MCF 10A (cell line): ENCODE measurements at regions of chr13 and their contacts with region 1.

Region 1: GRCh38 chr13:75876360-75877050 is 240.4 kb downstream of the LMO7 start:
- DNase-seq: peak; percentile 80
- H3K4me3 Mint-ChIP-seq: no peak overlapping the region
- H3K27ac Mint-ChIP-seq: no peak overlapping the region
- H3K4me1 Mint-ChIP-seq: no peaks in the 10 kb centered on the region
- H3K27me3 Mint-ChIP-seq: no peaks in the 10 kb centered on the region
- CTCF ChIP-seq: peak; percentile 90

Region 2: GRCh38 chr13:75798353-75799255 is 77.9 kb before region 1 on chr13:
- CTCF ChIA-PET with region 1: no interaction called
- POLR2A ChIA-PET with region 1: no interaction called
- intact Hi-C with region 1: no loop called
- DNase-seq: peak; percentile 44
- H3K4me3 Mint-ChIP-seq: no peak overlapping the region
- H3K27ac Mint-ChIP-seq: no peak overlapping the region
- H3K4me1 Mint-ChIP-seq: no peaks in the 10 kb centered on the region
- H3K27me3 Mint-ChIP-seq: no peaks in the 10 kb centered on the region
- CTCF ChIP-seq: no peak

Region 3: GRCh38 chr13:75889427-75889826 is 12.9 kb after region 1 on chr13:
- CTCF ChIA-PET with region 1: interaction called, 11 read pairs
- POLR2A ChIA-PET with region 1: no interaction called
- intact Hi-C with region 1: no loop called
- DNase-seq: no peak
- H3K4me3 Mint-ChIP-seq: no peak overlapping the region
- H3K27ac Mint-ChIP-seq: no peak overlapping the region
- H3K4me1 Mint-ChIP-seq: no peaks in the 10 kb centered on the region
- H3K27me3 Mint-ChIP-seq: no peaks in the 10 kb centered on the region
- CTCF ChIP-seq: no peak

Region 4: DNA sequence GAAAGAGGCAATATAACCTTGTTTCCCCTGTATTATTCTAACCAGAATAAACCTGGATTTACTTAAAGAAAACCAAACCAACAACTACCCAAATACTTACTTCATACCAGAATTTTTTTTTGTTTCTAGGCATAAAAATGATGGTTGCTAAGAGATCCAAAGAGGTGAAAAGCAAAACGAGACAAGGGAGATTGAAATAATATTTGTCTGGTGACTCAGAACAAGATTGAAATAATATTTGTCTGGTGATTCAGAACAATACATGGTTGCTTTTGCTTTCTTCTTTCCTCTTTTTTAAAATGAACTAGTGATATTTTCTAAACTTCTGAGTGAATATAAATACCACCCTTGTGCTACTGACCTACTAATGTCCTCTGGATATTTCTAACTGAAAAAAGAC is 416.8 kb after region 1 on chr13:
- CTCF ChIA-PET with region 1: interaction called, 4 read pairs
- POLR2A ChIA-PET with region 1: no interaction called
- intact Hi-C with region 1: loop called (anchors 2 kb)
- DNase-seq: peak; percentile 55
- H3K4me3 Mint-ChIP-seq: peak overlapping the region; percentile 25
- H3K27ac Mint-ChIP-seq: peak overlapping the region; percentile 3
- H3K4me1 Mint-ChIP-seq: peaks cover 14% of the 10 kb centered on the region
- H3K27me3 Mint-ChIP-seq: no peaks in the 10 kb centered on the region
- CTCF ChIP-seq: no peak

Region 5: GRCh38 chr13:76667551-76667950 is 791.0 kb after region 1 on chr13:
- CTCF ChIA-PET with region 1: interaction called, 4 read pairs
- POLR2A ChIA-PET with region 1: no interaction called
- intact Hi-C with region 1: loop called (anchors 10 kb)
- DNase-seq: peak; percentile 59
- H3K4me3 Mint-ChIP-seq: no peak overlapping the region
- H3K27ac Mint-ChIP-seq: no peak overlapping the region
- H3K4me1 Mint-ChIP-seq: peaks cover 20% of the 10 kb centered on the region
- H3K27me3 Mint-ChIP-seq: no peaks in the 10 kb centered on the region
- CTCF ChIP-seq: peak; percentile 26

Region 6: GRCh38 chr13:76894401-76895110 is 1018.1 kb after region 1 on chr13:
- CTCF ChIA-PET with region 1: interaction called, 17 read pairs
- POLR2A ChIA-PET with region 1: interaction called, 3 read pairs
- intact Hi-C with region 1: loop called (anchors 5 kb)
- DNase-seq: peak; percentile 24
- H3K4me3 Mint-ChIP-seq: no peak overlapping the region
- H3K27ac Mint-ChIP-seq: no peak overlapping the region
- H3K4me1 Mint-ChIP-seq: peaks cover 14% of the 10 kb centered on the region
- H3K27me3 Mint-ChIP-seq: no peaks in the 10 kb centered on the region
- CTCF ChIP-seq: no peak

Region 7: DNA sequence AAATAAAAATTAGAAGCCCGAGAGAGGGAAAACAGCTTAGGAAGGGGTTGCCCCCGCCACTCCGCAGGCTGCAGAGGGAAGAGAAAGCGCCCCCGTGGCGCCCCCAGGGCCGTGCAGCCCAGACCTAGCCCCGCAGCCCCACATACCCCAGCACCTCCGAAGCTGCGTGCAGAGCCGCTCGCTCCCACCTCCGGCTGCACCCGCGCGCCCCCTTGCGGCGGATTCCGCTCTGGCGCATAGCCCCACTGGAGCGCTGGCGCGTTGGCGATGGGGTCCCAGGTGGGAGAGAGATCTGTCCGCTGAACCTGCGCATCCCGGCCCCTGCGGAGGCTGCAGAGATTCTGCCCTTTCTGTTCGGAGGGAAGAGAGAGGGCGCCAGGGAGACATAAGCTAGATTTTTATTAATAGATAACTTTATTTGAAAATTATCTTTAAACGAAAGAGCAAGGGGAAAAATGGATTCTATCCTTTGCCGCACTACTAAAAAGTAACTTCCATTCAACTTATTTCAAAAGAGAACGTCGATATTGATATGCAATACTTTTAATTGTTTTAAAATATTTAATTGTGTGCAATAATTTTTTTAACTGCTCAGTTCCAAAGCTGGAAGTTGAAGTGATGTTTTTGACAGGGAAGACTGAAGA is 1103.7 kb after region 1 on chr13:
- CTCF ChIA-PET with region 1: interaction called, 11 read pairs
- POLR2A ChIA-PET with region 1: no interaction called
- intact Hi-C with region 1: no loop called
- DNase-seq: peak; percentile 70
- H3K4me3 Mint-ChIP-seq: peak overlapping the region; percentile 52
- H3K27ac Mint-ChIP-seq: no peak overlapping the region
- H3K4me1 Mint-ChIP-seq: peaks cover 19% of the 10 kb centered on the region
- H3K27me3 Mint-ChIP-seq: peaks cover 20% of the 10 kb centered on the region
- CTCF ChIP-seq: peak; percentile 94